Mammary epithelial cell (primary cell): ENCODE measurements at regions of chr4 and their contacts with region 1.

Region 1: DNA sequence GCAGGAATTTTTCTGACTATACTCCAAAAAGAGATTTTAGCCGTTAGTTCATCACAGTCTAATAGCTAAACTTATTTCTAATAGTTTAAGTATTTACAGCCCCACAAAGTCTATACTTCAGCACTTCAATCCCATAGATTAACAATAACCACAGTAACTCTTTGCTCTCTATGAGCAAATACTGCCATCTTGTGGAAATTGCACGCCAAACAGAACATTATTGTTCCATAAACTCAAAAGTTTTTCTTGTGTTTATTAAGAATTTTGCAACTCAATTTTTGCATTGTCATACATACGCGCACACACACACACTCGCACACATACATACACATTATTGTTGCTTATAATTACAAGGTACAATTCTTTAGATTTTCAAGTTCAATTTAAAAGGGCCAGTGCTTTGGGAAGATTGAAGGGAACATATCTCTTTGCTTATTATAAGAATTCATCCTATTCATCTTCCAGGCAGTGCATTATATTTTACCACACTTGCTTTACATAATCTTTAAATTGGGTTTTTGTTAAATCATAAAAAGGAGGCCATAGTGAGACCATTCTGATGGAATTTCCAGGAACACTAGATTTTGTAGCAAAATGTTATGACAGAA is 63.8 kb upstream of the ATOH1 start:
- DNase-seq: peak; percentile 26
- H3K4me3 ChIP-seq: no peak overlapping the region
- H3K27ac ChIP-seq: no peak overlapping the region
- H3K4me1 ChIP-seq: no peaks in the 10 kb centered on the region
- H3K27me3 ChIP-seq: peaks cover 2% of the 10 kb centered on the region
- CTCF ChIP-seq: peak; percentile 72 to 81

Region 2: GRCh38 chr4:93157994-93158393 is 606.7 kb before region 1 on chr4:
- CTCF ChIA-PET with region 1: no interaction called
- dilution Hi-C with region 1: no loop called
- in situ Hi-C with region 1: no loop called
- intact Hi-C with region 1: loop called (anchors 10 kb)
- DNase-seq: no peak
- H3K4me3 ChIP-seq: no peak overlapping the region
- H3K27ac ChIP-seq: no peak overlapping the region
- H3K4me1 ChIP-seq: no peaks in the 10 kb centered on the region
- H3K27me3 ChIP-seq: peaks cover 2% of the 10 kb centered on the region
- CTCF ChIP-seq: peak; percentile 24 to 62

Region 3: GRCh38 chr4:93710101-93710846 is 54.5 kb before region 1 on chr4:
- CTCF ChIA-PET with region 1: no interaction called
- dilution Hi-C with region 1: no loop called
- in situ Hi-C with region 1: no loop called
- intact Hi-C with region 1: loop called (anchors 1 kb)
- DNase-seq: peak; percentile 5
- H3K4me3 ChIP-seq: no peak overlapping the region
- H3K27ac ChIP-seq: no peak overlapping the region
- H3K4me1 ChIP-seq: no peaks in the 10 kb centered on the region
- H3K27me3 ChIP-seq: no peaks in the 10 kb centered on the region
- CTCF ChIP-seq: peak; percentile 35 to 52

Region 4: GRCh38 chr4:93960450-93960849 is 195.7 kb after region 1 on chr4:
- CTCF ChIA-PET with region 1: no interaction called
- dilution Hi-C with region 1: no loop called
- in situ Hi-C with region 1: no loop called
- intact Hi-C with region 1: no loop called
- DNase-seq: no peak
- H3K4me3 ChIP-seq: no peak overlapping the region
- H3K27ac ChIP-seq: no peak overlapping the region
- H3K4me1 ChIP-seq: no peaks in the 10 kb centered on the region
- H3K27me3 ChIP-seq: no peaks in the 10 kb centered on the region
- CTCF ChIP-seq: no peak